ENCODE measurements at regions of chr15 and their contacts with region 1.

Region 1: GRCh38 chr15:52050416-52050815 is 31.4 kb downstream of the MAPK6 start:
- DNase-seq: no peak
- H3K4me3 Mint-ChIP-seq: no peak overlapping the region
- H3K27ac Mint-ChIP-seq: no peak overlapping the region
- H3K4me1 Mint-ChIP-seq: peaks cover 18% of the 10 kb centered on the region
- H3K27me3 Mint-ChIP-seq: no peaks in the 10 kb centered on the region

Region 2: DNA sequence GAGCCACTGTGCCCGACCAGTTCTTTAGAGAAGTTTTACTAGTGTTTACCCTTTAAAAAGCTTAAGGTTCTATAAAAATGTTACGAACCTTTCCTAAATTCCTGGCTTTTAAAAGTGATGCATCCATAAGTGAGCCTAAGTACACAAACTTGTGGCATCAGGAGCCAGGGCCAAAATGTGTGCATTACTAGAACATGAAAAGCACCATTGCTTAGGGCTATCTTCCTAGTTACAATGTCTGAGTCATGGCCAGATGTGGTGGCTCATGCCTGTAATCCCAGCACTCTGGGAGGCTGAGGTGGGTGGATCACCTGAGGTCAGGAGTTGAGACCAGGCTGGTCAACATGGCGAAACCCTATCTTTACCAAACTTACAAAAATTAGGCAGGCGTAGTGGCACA is 118.8 kb before region 1 on chr15:
- intact Hi-C with region 1: no loop called
- DNase-seq: no peak
- H3K4me3 Mint-ChIP-seq: no peak overlapping the region
- H3K27ac Mint-ChIP-seq: no peak overlapping the region
- H3K4me1 Mint-ChIP-seq: peaks cover 6% of the 10 kb centered on the region
- H3K27me3 Mint-ChIP-seq: no peaks in the 10 kb centered on the region

Region 3: DNA sequence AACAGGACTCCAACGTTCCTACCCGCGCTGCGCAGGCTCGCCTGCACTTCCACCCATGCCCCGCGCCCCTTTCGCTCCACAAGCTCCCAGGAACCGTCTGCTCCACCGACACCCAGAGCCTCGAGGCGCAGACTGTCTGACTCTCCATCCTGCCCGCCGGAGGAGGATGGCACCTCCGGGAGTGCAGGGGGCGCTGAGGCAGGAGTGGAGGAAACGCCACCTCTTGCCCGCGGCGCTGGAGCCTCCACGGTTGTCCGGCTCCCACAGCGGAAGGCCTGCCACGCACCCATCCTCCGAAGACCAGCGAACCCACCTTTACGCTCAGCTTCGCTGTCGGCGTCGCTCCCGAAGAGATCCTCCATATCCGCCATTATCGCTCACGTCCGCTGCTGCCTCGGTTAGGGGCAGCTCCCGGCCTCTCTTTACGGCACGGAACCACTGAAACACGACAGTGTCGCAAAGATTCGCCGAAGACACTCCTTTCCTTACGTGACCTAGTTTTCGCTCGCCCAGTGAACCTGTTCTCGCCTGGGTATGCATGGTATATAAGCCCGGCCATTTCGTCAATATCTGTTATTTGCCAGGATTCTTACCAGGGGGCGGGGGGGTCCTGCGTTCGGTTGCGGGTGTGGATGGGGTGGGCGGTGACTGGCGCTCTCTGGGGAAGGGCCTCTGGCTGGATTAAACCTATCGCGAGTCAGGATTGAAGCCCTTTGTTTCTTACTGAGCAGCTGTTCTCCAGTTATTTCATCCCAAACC is 78.9 kb before region 1 on chr15 and contains the start of gene LEO1:
- intact Hi-C with region 1: loop called (anchors 2 kb)
- DNase-seq: peak; percentile 97
- H3K4me3 Mint-ChIP-seq: peak within 1 kb of the TSS; percentile 87
- H3K27ac Mint-ChIP-seq: peak within 1 kb of the TSS; percentile 94
- H3K4me1 Mint-ChIP-seq: peaks cover 23% of the 10 kb centered on the region
- H3K27me3 Mint-ChIP-seq: peaks cover 2% of the 10 kb centered on the region
- total RNA-seq, gene LEO1: 35.0 and 35.7 TPM in 2 replicates